Naive thymus-derived CD4-positive, alpha-beta T cell (primary cell): ENCODE measurements at regions of chr3 and their contacts with region 1.

Region 1: DNA sequence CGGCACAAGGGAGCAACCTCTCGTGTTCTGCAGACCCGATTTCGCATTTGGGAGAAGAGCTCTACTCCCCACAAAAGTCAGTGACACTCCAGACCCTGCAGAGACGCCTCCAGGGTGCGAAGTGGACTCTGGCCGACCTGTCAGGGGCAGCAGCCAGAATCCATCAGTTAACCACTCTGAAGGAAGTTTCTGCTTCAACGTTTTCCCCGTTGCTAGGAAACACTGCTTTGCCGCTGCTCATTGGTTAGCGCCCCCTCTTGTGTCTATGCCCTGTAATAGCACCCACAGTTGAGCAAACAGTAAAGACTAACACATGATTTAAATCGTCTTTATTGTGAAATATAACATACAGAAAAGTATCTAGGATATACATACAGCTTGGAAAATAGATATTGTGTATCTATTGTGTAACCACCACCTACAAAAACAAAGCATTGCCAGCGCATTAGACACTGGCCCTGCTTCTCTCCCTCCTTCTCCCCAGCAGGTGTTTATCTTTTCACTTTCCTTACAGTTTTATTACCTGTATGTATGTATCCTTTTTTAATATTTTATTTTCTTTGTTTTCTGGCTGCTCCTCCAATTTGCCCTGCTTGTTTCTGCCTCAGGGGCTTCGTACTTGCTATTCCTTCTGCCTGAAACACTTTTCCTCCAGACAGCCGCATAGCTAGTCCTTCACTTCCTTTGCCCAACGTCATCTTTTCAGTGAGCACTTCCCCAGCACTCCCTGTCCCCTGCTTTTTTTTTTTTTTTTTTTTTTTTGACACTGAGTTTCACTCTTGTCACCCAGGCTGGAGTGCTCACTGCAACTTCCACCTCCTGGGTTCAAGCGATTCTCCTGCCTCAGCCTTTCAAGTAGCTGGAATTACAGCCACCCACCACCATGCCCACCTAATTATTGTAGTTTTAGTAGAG is 38.8 kb downstream of the TMEM40 start:
- DNase-seq: peak; percentile 37 to 85 (median 81)
- ATAC-seq: peak; percentile 98
- H3K4me3 ChIP-seq: peak overlapping the region; percentile 50
- H3K4me3 Mint-ChIP-seq: peak overlapping the region; percentile 30 to 79 (median 72)
- H3K27ac ChIP-seq: no peak overlapping the region
- H3K27ac Mint-ChIP-seq: peak overlapping the region; percentile 46 to 93 (median 74)
- H3K4me1 ChIP-seq: peaks cover 0 to 5% of the 10 kb centered on the region in 2 donors
- H3K4me1 Mint-ChIP-seq: peaks cover 6 to 12% (median 9%) of the 10 kb centered on the region in 7 donors
- H3K27me3 ChIP-seq: no peaks in the 10 kb centered on the region
- H3K27me3 Mint-ChIP-seq: no peaks in the 10 kb centered on the region

Region 2: DNA sequence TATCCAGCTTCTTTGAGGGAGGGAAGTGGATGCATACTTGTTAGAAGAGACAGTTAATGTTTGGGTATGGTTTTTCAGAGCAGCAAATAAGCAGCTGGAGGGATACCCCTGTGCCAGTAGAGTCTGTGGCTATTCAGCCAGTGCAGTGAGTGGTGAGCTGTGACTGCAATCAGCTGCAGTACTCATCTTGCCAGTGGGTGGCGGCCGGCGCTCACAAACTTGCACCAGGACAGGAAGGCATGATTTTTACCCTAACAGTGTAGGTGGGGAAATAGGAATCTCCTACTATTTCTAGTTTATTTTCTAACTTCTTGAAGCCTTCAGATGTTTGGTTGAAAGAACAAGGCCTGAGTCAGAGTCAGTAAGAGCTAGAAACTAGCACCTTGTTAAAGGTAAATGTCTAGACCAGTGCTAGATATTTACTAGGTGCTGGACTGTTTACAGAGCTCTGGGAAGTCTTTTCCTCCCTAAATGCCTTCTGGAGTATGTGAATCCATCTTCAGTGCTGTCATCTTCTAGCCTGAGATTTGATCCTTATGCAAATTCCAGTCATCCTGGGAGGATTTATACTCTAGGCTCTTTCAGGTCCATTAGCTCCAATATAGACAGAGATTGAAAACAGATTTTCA is 585.1 kb before region 1 on chr3:
- CTCF ChIA-PET with region 1: no interaction called
- POLR2A ChIA-PET with region 1: no interaction called
- intact Hi-C with region 1: loop called in 1 of 2 experiments (anchors 1 kb)
- DNase-seq: peak; percentile 9 to 68 (median 47)
- ATAC-seq: peak; percentile 83
- H3K4me3 ChIP-seq: no peak overlapping the region
- H3K4me3 Mint-ChIP-seq: no peak overlapping the region
- H3K27ac ChIP-seq: no peak overlapping the region
- H3K27ac Mint-ChIP-seq: no peak overlapping the region
- H3K4me1 ChIP-seq: no peaks in the 10 kb centered on the region
- H3K4me1 Mint-ChIP-seq: no peaks in the 10 kb centered on the region
- H3K27me3 ChIP-seq: no peaks in the 10 kb centered on the region
- H3K27me3 Mint-ChIP-seq: peaks cover 16 to 29% (median 22%) of the 10 kb centered on the region in 5 donors

Region 3: DNA sequence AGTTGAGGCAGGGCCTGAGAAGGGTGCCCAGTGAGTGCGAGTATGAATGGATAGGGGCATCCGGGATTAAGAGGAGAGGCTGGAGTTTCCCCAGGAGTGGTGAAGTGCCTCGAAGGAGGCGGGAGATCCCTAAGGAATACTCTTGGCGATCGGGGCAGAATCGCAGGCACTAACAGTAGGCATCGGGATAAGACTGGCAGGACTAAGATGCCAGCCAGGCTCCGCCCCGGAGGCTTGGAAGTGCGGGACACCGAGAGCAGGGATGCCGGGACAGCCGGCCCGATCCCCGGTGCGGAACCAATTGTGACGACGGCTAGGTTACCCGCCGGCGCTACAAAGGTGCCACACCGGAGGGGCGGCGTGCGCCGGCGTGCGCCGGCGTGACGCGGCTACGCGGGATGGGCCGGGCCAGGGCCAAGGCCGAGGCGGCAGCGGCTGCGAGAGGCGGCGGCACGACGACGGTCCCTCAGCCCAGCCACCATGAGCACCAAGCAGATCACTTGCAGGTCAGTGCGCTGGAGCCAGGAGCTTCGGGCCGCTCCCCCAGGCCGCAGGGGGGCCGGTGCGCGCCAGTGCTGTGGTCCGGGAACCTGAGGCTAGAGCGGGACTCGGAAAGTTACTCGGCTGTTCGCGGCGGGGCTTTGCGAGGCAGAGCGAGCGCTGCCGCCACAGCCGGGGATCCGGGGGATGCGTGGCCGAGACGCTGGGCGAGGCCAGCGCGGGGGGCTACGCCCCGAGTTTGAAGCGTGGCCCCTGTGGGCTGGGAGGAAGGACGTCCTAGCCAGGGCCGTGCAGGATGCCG is 163.4 kb before region 1 on chr3 and contains the start of gene MKRN2:
- CTCF ChIA-PET with region 1: no interaction called
- POLR2A ChIA-PET with region 1: no interaction called
- intact Hi-C with region 1: loop called (anchors 2 kb)
- DNase-seq: peak; percentile 74 to 89 (median 83)
- ATAC-seq: peak; percentile 98
- H3K4me3 ChIP-seq: peak within 1 kb of the TSS; percentile 95
- H3K4me3 Mint-ChIP-seq: peak within 1 kb of the TSS; percentile 90 to 100 (median 96)
- H3K27ac ChIP-seq: peak within 1 kb of the TSS; percentile 94
- H3K27ac Mint-ChIP-seq: peak within 1 kb of the TSS; percentile 87 to 95 (median 93)
- H3K4me1 ChIP-seq: peaks cover 31 to 38% of the 10 kb centered on the region in 2 donors
- H3K4me1 Mint-ChIP-seq: peaks cover 40 to 71% (median 68%) of the 10 kb centered on the region in 7 donors
- H3K27me3 ChIP-seq: peaks cover 6% of the 10 kb centered on the region in 2 donors
- H3K27me3 Mint-ChIP-seq: peaks cover 22 to 37% (median 28%) of the 10 kb centered on the region in 5 donors
- total RNA-seq, gene MKRN2: 21.9 to 34.5 (median 25.4) TPM

Region 4: GRCh38 chr3:12613250-12613649 is 107.0 kb before region 1 on chr3:
- CTCF ChIA-PET with region 1: no interaction called
- POLR2A ChIA-PET with region 1: no interaction called
- intact Hi-C with region 1: loop called in 1 of 2 experiments (anchors 5 kb)
- DNase-seq: peak in 3 of 9 donors; percentile 9 to 18 (median 14)
- ATAC-seq: no peak
- H3K4me3 ChIP-seq: no peak overlapping the region
- H3K4me3 Mint-ChIP-seq: peak overlapping the region in 3 of 10 donors; percentile 37 to 45 (median 44)
- H3K27ac ChIP-seq: peak overlapping the region; percentile 17
- H3K27ac Mint-ChIP-seq: peak overlapping the region in 8 of 9 donors; percentile 27 to 86 (median 76)
- H3K4me1 ChIP-seq: peaks cover 3 to 5% of the 10 kb centered on the region in 2 donors
- H3K4me1 Mint-ChIP-seq: peaks cover 17 to 65% (median 51%) of the 10 kb centered on the region in 7 donors
- H3K27me3 ChIP-seq: no peaks in the 10 kb centered on the region
- H3K27me3 Mint-ChIP-seq: no peaks in the 10 kb centered on the region

Region 5: GRCh38 chr3:12706504-12707253 is 13.6 kb before region 1 on chr3:
- CTCF ChIA-PET with region 1: interaction called, 9 read pairs
- POLR2A ChIA-PET with region 1: no interaction called
- intact Hi-C with region 1: loop called (anchors 1 kb)
- DNase-seq: peak; percentile 31 to 65 (median 49)
- ATAC-seq: peak; percentile 98
- H3K4me3 ChIP-seq: no peak overlapping the region
- H3K4me3 Mint-ChIP-seq: no peak overlapping the region
- H3K27ac ChIP-seq: no peak overlapping the region
- H3K27ac Mint-ChIP-seq: peak overlapping the region in 1 of 9 donors; percentile 36
- H3K4me1 ChIP-seq: no peaks in the 10 kb centered on the region
- H3K4me1 Mint-ChIP-seq: no peaks in the 10 kb centered on the region
- H3K27me3 ChIP-seq: no peaks in the 10 kb centered on the region
- H3K27me3 Mint-ChIP-seq: peaks cover 0 to 12% (median 0%) of the 10 kb centered on the region in 5 donors

Region 6: GRCh38 chr3:12810013-12810780 is 90.0 kb after region 1 on chr3:
- CTCF ChIA-PET with region 1: no interaction called
- POLR2A ChIA-PET with region 1: no interaction called
- intact Hi-C with region 1: loop called in 1 of 2 experiments (anchors 1 kb)
- DNase-seq: peak; percentile 89 to 98 (median 94)
- ATAC-seq: peak; percentile 99
- H3K4me3 ChIP-seq: peak overlapping the region; percentile 79
- H3K4me3 Mint-ChIP-seq: peak overlapping the region; percentile 63 to 82 (median 77)
- H3K27ac ChIP-seq: peak overlapping the region; percentile 68
- H3K27ac Mint-ChIP-seq: peak overlapping the region; percentile 23 to 85 (median 64)
- H3K4me1 ChIP-seq: peaks cover 3 to 7% of the 10 kb centered on the region in 2 donors
- H3K4me1 Mint-ChIP-seq: peaks cover 4 to 16% (median 12%) of the 10 kb centered on the region in 7 donors
- H3K27me3 ChIP-seq: no peaks in the 10 kb centered on the region
- H3K27me3 Mint-ChIP-seq: peaks cover 0 to 11% (median 0%) of the 10 kb centered on the region in 5 donors

Region 7: GRCh38 chr3:12891985-12892839 is 172.0 kb after region 1 on chr3:
- CTCF ChIA-PET with region 1: no interaction called
- POLR2A ChIA-PET with region 1: no interaction called
- intact Hi-C with region 1: loop called in 1 of 2 experiments (anchors 5 kb)
- DNase-seq: peak in 8 of 9 donors; percentile 29 to 57 (median 50)
- ATAC-seq: peak; percentile 65
- H3K4me3 ChIP-seq: peak overlapping the region; percentile 19
- H3K4me3 Mint-ChIP-seq: peak overlapping the region in 9 of 10 donors; percentile 12 to 75 (median 58)
- H3K27ac ChIP-seq: no peak overlapping the region
- H3K27ac Mint-ChIP-seq: peak overlapping the region in 3 of 9 donors; percentile 9 to 47 (median 12)
- H3K4me1 ChIP-seq: peaks cover 0 to 7% of the 10 kb centered on the region in 2 donors
- H3K4me1 Mint-ChIP-seq: peaks cover 6 to 14% (median 12%) of the 10 kb centered on the region in 7 donors
- H3K27me3 ChIP-seq: no peaks in the 10 kb centered on the region
- H3K27me3 Mint-ChIP-seq: peaks cover 0 to 38% (median 14%) of the 10 kb centered on the region in 5 donors